ENCODE measurements at regions of chr7 and their contacts with region 1.

Region 1: GRCh38 chr7:876167-876967 is at the start of gene GET4:
- DNase-seq: peak; percentile 88 to 98
- H3K4me3 ChIP-seq: peak within 1 kb of the TSS; percentile 88 to 91
- H3K27ac ChIP-seq: peak within 1 kb of the TSS; percentile 78 to 86
- H3K4me1 ChIP-seq: peaks cover 5 to 23% of the 10 kb centered on the region in 2 donors
- H3K27me3 ChIP-seq: no peaks in the 10 kb centered on the region
- CTCF ChIP-seq: peak; percentile 19 to 45 (median 42)
- total RNA-seq, gene GET4: 4.2 TPM

Region 2: GRCh38 chr7:726084-726853 is 150.1 kb before region 1 on chr7 and contains the start of gene DNAAF5:
- intact Hi-C with region 1: loop called (anchors 2 kb)
- DNase-seq: peak; percentile 30 to 88
- H3K4me3 ChIP-seq: peak within 1 kb of the TSS; percentile 78 to 97
- H3K27ac ChIP-seq: peak within 1 kb of the TSS; percentile 41 to 55
- H3K4me1 ChIP-seq: peaks cover 0 to 4% of the 10 kb centered on the region in 2 donors
- H3K27me3 ChIP-seq: no peaks in the 10 kb centered on the region
- CTCF ChIP-seq: no peak
- total RNA-seq, gene DNAAF5: 20.5 TPM

Region 3: GRCh38 chr7:974820-975681 is 98.7 kb after region 1 on chr7 and contains the start of gene COX19:
- intact Hi-C with region 1: loop called (anchors 2 kb)
- DNase-seq: peak; percentile 42 to 91
- H3K4me3 ChIP-seq: peak within 1 kb of the TSS; percentile 88 to 94
- H3K27ac ChIP-seq: peak within 1 kb of the TSS; percentile 97 to 98
- H3K4me1 ChIP-seq: peaks cover 0 to 17% of the 10 kb centered on the region in 2 donors
- H3K27me3 ChIP-seq: no peaks in the 10 kb centered on the region
- CTCF ChIP-seq: no peak
- total RNA-seq, gene COX19: 2.1 TPM

Region 4: GRCh38 chr7:1466524-1467271 is 590.3 kb after region 1 on chr7:
- intact Hi-C with region 1: loop called (anchors 10 kb)
- DNase-seq: peak; percentile 67 to 91
- H3K4me3 ChIP-seq: peak overlapping the region in 1 of 2 donors; percentile 1
- H3K27ac ChIP-seq: peak overlapping the region; percentile 84
- H3K4me1 ChIP-seq: peaks cover 6 to 29% of the 10 kb centered on the region in 2 donors
- H3K27me3 ChIP-seq: no peaks in the 10 kb centered on the region
- CTCF ChIP-seq: peak in 1 of 3 experiments; percentile 7